CD8-positive, alpha-beta memory T cell (primary cell): ENCODE measurements at regions of chr4 and their contacts with region 1.

Region 1: DNA sequence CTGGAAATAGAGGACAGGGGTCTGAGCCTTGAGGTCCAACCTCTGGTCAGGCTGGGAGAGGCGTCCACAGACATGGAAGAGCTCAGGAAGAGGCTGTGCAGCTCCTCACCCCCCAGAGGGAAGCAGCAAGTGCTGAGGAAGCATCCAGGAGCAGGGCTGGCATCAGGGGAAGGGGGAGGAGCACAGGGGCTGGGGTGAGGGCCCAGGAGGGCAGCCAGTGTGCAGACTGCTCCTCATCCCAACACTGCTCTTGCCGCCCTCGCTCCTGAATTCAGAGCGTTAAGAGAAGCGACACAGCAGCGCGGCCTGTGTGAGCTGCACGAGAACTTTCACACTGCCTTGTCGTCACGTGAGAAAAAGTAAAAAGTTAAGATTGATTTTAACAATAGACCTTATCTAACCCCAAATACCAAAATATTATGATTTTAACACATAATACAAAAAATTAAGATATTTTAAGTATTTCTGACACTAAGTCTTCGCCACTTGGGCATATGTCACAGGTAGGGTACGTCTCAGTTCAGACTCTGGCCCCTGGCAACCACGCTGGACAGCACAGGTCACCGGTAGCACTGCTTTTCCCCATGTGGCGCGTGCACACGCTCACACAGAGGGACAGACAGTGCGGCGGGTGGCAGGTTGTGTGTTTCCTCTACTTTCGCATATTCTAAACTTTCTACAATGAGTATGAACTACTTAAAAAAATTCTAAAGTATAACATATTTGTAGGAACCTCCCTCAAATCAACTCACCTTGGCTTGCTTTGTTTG is 19.7 kb downstream of the NOP14 start:
- DNase-seq: no peak
- H3K4me3 ChIP-seq: no peak overlapping the region
- H3K4me3 Mint-ChIP-seq: peak overlapping the region in 2 of 7 donors; percentile 61 to 83
- H3K27ac ChIP-seq: peak overlapping the region; percentile 31
- H3K27ac Mint-ChIP-seq: peak overlapping the region in 7 of 8 donors; percentile 36 to 96 (median 72)
- H3K4me1 ChIP-seq: no peaks in the 10 kb centered on the region
- H3K4me1 Mint-ChIP-seq: peaks cover 11 to 32% (median 25%) of the 10 kb centered on the region in 3 donors
- H3K27me3 ChIP-seq: no peaks in the 10 kb centered on the region
- H3K27me3 Mint-ChIP-seq: peaks cover 0 to 5% of the 10 kb centered on the region in 2 donors

Region 2: GRCh38 chr4:2954358-2955185 is 11.1 kb after region 1 on chr4:
- CTCF ChIA-PET with region 1: interaction called, 13 read pairs
- POLR2A ChIA-PET with region 1: interaction called, 6 read pairs
- DNase-seq: peak in 4 of 5 donors; percentile 43 to 68 (median 51)
- H3K4me3 ChIP-seq: no peak overlapping the region
- H3K4me3 Mint-ChIP-seq: peak overlapping the region in 3 of 7 donors; percentile 4 to 28 (median 23)
- H3K27ac ChIP-seq: no peak overlapping the region
- H3K27ac Mint-ChIP-seq: peak overlapping the region; percentile 85 to 96 (median 92)
- H3K4me1 ChIP-seq: peaks cover 5% of the 10 kb centered on the region
- H3K4me1 Mint-ChIP-seq: peaks cover 23 to 46% (median 45%) of the 10 kb centered on the region in 3 donors
- H3K27me3 ChIP-seq: no peaks in the 10 kb centered on the region
- H3K27me3 Mint-ChIP-seq: no peaks in the 10 kb centered on the region